ENCODE measurements at regions of chr3 and their contacts with region 1.

Region 1: GRCh38 chr3:49445381-49445780 is 16.3 kb upstream of the NICN1 start:
- DNase-seq: no peak
- ATAC-seq: no peak
- H3K4me3 ChIP-seq: no peak overlapping the region
- H3K27ac ChIP-seq: peak overlapping the region in 1 of 10 donors; percentile 86
- H3K4me1 ChIP-seq: peaks cover 0 to 35% (median 14%) of the 10 kb centered on the region in 9 donors
- H3K27me3 ChIP-seq: no peaks in the 10 kb centered on the region
- CTCF ChIP-seq: no peak

Region 2: GRCh38 chr3:49104483-49105291 is 340.7 kb before region 1 on chr3 and contains the start of gene QARS1:
- intact Hi-C with region 1: loop called in 1 of 10 experiments (anchors 10 kb)
- DNase-seq: peak; percentile 94 to 97
- ATAC-seq: peak; percentile 95 to 99 (median 98)
- H3K4me3 ChIP-seq: peak within 1 kb of the TSS; percentile 63 to 100 (median 86)
- H3K27ac ChIP-seq: peak within 1 kb of the TSS; percentile 84 to 94 (median 91)
- H3K4me1 ChIP-seq: peaks cover 12 to 27% (median 23%) of the 10 kb centered on the region in 9 donors
- H3K27me3 ChIP-seq: no peaks in the 10 kb centered on the region
- CTCF ChIP-seq: no peak
- total RNA-seq, gene QARS1: 173 to 265 (median 206) TPM

Region 3: DNA sequence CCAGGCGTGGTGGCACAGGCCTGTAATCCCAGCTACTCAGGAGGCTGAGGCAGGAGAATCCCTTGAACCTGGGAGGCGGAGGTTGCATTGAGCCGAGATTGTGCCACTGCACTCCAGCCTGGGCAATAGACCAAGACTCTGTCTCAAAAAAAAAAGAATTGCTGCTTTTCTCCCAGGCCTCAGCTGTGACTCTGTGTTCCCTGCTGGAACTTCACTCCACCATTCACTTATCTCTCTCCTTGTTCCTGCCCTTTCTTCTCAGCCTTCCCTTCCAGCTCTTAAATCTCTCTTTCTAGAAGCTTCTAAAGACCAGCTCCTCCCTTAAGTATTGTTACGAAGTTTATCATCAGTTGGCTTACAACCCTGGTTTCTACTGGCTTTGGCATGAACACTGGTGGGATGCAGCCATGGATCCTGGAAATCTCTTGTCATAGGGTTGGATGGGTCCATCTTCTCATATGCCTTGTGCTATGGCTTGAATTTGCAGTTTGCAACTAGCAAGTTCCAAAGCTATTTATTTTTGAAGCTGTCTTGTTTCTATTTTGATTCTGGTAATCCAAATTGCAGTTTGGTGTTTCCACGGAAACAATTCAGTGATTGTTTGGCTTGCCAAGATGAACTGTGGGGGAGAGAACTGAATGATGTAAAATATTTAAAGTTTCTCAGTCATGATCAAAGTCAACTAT is 178.8 kb before region 1 on chr3:
- intact Hi-C with region 1: no loop called
- DNase-seq: no peak
- ATAC-seq: peak in 6 of 8 donors; percentile 21 to 46 (median 32)
- H3K4me3 ChIP-seq: no peak overlapping the region
- H3K27ac ChIP-seq: peak overlapping the region in 9 of 10 donors; percentile 12 to 73 (median 60)
- H3K4me1 ChIP-seq: peaks cover 4 to 25% (median 17%) of the 10 kb centered on the region in 9 donors
- H3K27me3 ChIP-seq: no peaks in the 10 kb centered on the region
- CTCF ChIP-seq: no peak

Region 4: GRCh38 chr3:49295489-49296058 is 149.8 kb before region 1 on chr3:
- intact Hi-C with region 1: loop called in 3 of 10 experiments (anchors 2 to 10 kb)
- DNase-seq: peak in 1 of 2 donors; percentile 14
- ATAC-seq: no peak
- H3K4me3 ChIP-seq: no peak overlapping the region
- H3K27ac ChIP-seq: peak overlapping the region in 7 of 10 donors; percentile 78 to 93 (median 84)
- H3K4me1 ChIP-seq: peaks cover 3 to 48% (median 25%) of the 10 kb centered on the region in 9 donors
- H3K27me3 ChIP-seq: no peaks in the 10 kb centered on the region
- CTCF ChIP-seq: peak in 8 of 9 donors; percentile 26 to 69 (median 56)

Region 5: DNA sequence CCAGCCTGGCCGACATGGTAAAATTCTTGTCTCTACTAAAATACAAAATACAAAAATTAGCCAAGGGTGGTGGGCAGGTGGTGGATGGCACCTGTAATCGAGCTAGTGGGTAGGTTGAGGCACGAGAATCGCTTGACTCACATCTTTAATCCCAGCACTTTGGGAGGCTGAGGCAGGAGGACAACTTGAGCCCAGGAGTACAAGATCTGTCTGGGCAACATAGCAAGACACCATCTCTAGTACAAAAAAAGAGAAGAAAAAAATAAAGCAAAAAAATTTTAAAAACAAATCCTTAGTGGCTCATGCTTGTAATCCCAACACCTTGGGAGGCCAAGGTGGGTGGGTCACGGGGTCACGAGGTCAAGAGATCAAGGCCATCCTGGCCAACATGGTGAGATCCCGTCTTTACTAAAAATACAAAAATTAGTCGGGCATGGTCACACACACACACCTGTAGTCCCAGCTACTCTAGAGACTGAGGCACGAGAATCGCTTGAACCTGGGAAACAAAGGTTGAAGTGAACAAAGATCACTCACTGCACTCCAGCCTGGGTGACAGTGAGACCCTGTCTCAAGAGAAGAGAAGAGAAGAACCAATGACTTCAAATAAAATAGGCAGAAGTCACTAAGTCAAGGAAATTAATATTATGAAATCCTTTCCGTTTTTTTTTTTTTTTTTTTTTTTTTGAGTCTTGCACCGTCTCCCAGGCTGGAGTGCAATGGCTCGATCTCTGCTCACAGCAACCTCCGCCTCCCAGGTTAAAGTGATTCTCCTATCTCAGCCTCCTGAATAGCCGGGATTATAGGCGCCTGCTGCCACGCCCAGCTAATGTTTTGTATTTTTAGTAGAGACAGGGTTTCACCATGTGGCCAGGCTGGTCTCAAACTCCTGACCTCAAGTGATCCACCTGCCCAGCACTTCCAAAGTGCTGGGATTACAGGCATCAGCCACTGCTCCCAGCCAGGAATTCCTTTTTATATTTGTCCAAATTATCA is 38.5 kb before region 1 on chr3:
- intact Hi-C with region 1: no loop called
- DNase-seq: no peak
- ATAC-seq: no peak
- H3K4me3 ChIP-seq: no peak overlapping the region
- H3K27ac ChIP-seq: peak overlapping the region in 8 of 10 donors; percentile 1 to 48 (median 32)
- H3K4me1 ChIP-seq: peaks cover 4 to 82% (median 60%) of the 10 kb centered on the region in 9 donors
- H3K27me3 ChIP-seq: no peaks in the 10 kb centered on the region
- CTCF ChIP-seq: no peak

Measured in heart right ventricle (tissue), 16 donors.